ENCODE measurements at regions of chr16 and their contacts with region 1.

Region 1: DNA sequence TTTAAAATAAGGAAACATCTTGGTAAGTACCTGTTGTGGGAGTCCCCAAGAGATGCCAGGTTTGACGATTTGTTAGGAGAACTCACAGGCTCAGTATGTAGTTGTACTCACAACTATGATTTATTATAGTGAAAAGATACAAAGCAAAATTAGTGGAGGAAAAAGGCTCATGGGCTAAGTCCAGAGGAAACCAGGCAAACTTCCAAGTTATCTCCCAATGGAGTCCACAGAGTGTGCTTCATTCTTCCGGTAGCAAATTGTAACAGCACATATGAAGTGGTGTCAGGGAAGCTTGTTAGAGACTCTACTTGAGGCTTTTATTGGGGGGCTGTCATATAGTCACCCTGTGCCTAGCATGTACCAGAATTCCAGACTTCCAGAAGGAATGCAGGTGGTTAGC is 2.3 kb downstream of the DDX19A start:
- DNase-seq: no peak
- H3K4me3 ChIP-seq: no peak overlapping the region
- H3K4me3 Mint-ChIP-seq: no peak overlapping the region
- H3K27ac ChIP-seq: peak overlapping the region in 1 of 2 donors; percentile 40
- H3K27ac Mint-ChIP-seq: peak overlapping the region in 1 of 7 donors; percentile 53
- H3K4me1 ChIP-seq: peaks cover 13 to 17% of the 10 kb centered on the region in 2 donors
- H3K4me1 Mint-ChIP-seq: peaks cover 16% of the 10 kb centered on the region
- H3K27me3 ChIP-seq: no peaks in the 10 kb centered on the region
- H3K27me3 Mint-ChIP-seq: peaks cover 0 to 1% (median 0%) of the 10 kb centered on the region in 3 donors
- CTCF ChIP-seq: no peak

Region 2: DNA sequence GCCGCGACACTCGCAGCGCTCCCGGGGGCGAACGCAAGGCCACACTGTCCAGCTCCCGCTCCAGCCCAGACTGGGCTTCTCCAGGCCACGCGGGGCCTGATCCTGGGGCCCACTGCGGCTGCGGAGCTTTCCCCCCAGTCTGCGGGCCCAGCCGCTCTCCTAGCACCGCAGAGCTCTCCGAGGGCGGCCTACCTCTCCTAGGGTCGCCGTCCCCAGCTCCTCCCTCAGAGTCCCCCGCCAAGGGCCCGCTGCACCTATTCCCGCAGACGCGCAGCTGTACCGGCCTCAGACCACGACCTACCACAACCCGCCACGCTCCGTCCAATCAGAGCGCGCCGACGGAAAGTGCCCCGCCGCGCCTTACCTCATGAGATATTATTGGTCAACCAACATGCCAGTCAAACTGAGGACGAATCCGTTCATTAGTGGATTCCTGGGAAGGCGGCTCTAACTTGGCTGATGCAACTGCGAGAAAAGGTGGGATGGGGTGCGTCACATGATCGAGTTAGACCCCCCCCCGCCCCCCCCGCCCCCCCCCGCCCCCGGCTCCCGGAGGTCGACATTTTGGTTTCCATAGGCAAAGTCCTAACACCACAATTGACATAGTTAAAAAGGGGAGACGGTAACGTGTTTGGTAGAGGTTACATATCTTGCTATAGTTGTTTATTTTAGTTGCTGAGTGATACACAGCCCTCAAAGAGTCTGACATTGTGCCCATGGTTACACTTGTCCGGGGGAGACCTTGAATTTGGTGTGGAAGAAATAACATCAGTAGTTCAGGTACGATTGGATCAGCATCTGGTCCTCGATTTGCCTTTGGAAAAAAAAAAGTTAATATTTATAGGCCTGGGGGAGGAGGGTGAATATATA is 59.5 kb before region 1 on chr16 and contains the start of gene AARS1:
- intact Hi-C with region 1: loop called (anchors 2 to 10 kb)
- DNase-seq: peak; percentile 95 to 96 (median 95)
- H3K4me3 ChIP-seq: peak within 1 kb of the TSS; percentile 60 to 87 (median 82)
- H3K4me3 Mint-ChIP-seq: peak within 1 kb of the TSS; percentile 96 to 98
- H3K27ac ChIP-seq: peak within 1 kb of the TSS; percentile 64 to 87
- H3K27ac Mint-ChIP-seq: peak within 1 kb of the TSS; percentile 83 to 96 (median 90)
- H3K4me1 ChIP-seq: peaks cover 11% of the 10 kb centered on the region in 2 donors
- H3K4me1 Mint-ChIP-seq: peaks cover 11% of the 10 kb centered on the region
- H3K27me3 ChIP-seq: no peaks in the 10 kb centered on the region
- H3K27me3 Mint-ChIP-seq: peaks cover 0 to 1% (median 0%) of the 10 kb centered on the region in 3 donors
- CTCF ChIP-seq: no peak
- polyA plus RNA-seq, gene AARS1: 13.9 to 16.6 (median 16.3) TPM

Region 3: DNA sequence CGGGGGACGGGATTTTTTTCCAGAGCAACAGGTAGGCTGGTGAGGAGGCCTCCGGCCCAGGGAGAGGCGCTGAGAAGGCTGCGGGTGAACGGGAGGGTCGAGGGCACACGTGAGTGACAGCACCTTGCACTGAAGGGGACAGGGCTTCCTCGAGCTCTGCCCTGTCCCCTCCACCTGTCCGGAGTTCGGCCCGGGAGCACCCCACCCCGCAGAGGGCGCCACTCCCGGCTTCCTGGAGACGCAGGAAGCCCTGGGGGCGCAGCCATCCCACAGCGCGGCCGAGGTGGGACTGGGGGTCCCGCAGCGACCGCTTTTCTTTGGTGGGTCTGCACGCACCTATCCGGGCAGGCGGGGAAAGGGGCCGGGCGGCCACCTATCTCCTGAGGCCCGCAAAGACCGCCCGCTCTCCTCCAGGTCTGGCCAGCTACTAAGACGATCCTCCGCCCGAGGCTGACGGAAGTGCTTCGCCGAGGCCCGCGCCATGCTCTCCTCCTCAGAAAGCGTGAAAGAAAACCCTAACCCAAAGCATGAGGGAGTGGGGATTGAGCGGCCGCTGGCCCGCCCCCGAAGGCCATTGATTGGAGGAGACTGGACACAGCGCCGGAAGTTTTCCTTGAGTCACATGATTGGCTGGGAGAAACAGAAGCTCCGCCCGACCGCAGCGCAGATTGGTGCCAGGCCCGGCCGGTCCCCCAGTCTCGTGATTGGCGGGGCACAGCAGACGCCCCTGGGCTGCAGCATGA is 32.0 kb after region 1 on chr16:
- intact Hi-C with region 1: loop called in 1 of 2 experiments (anchors 5 kb)
- DNase-seq: peak; percentile 93 to 97 (median 95)
- H3K4me3 ChIP-seq: peak overlapping the region; percentile 42 to 84 (median 72)
- H3K4me3 Mint-ChIP-seq: peak overlapping the region; percentile 89 to 97
- H3K27ac ChIP-seq: peak overlapping the region; percentile 50 to 72
- H3K27ac Mint-ChIP-seq: peak overlapping the region; percentile 60 to 93 (median 88)
- H3K4me1 ChIP-seq: peaks cover 23 to 30% of the 10 kb centered on the region in 2 donors
- H3K4me1 Mint-ChIP-seq: peaks cover 25% of the 10 kb centered on the region
- H3K27me3 ChIP-seq: no peaks in the 10 kb centered on the region
- H3K27me3 Mint-ChIP-seq: peaks cover 0 to 3% (median 1%) of the 10 kb centered on the region in 3 donors
- CTCF ChIP-seq: peak; percentile 29

Region 4: GRCh38 chr16:70523076-70523742 is 174.2 kb after region 1 on chr16 and contains the start of gene COG4:
- intact Hi-C with region 1: loop called in 1 of 2 experiments (anchors 5 kb)
- DNase-seq: peak; percentile 85 to 88 (median 86)
- H3K4me3 ChIP-seq: peak within 1 kb of the TSS; percentile 84 to 99 (median 96)
- H3K4me3 Mint-ChIP-seq: peak within 1 kb of the TSS; percentile 96 to 99
- H3K27ac ChIP-seq: peak within 1 kb of the TSS; percentile 81 to 97
- H3K27ac Mint-ChIP-seq: peak within 1 kb of the TSS; percentile 94 to 99 (median 97)
- H3K4me1 ChIP-seq: peaks cover 34 to 50% of the 10 kb centered on the region in 2 donors
- H3K4me1 Mint-ChIP-seq: peaks cover 48% of the 10 kb centered on the region
- H3K27me3 ChIP-seq: no peaks in the 10 kb centered on the region
- H3K27me3 Mint-ChIP-seq: peaks cover 0 to 4% (median 1%) of the 10 kb centered on the region in 3 donors
- CTCF ChIP-seq: no peak
- polyA plus RNA-seq, gene COG4: 37.6 to 40.6 (median 40.1) TPM

Measured in CD14-positive monocyte (primary cell).